Activated CD8-positive, alpha-beta T cell treated with anti-CD3 and anti-CD28 coated beads, Interleukin-2, amount 10 ng/mL, durations not matched to agents 7 days and 5 days (primary cell): ENCODE measurements at regions of chrX and their contacts with region 1.

Region 1: GRCh38 chrX:107672955-107673378 is 44.7 kb downstream of the PRPS1 start:
- DNase-seq: peak; percentile 83
- ATAC-seq: peak; percentile 39
- H3K4me3 Mint-ChIP-seq: peak overlapping the region; percentile 56
- H3K27ac Mint-ChIP-seq: peak overlapping the region; percentile 89
- H3K4me1 Mint-ChIP-seq: peaks cover 44% of the 10 kb centered on the region
- H3K27me3 Mint-ChIP-seq: no peaks in the 10 kb centered on the region

Region 2: DNA sequence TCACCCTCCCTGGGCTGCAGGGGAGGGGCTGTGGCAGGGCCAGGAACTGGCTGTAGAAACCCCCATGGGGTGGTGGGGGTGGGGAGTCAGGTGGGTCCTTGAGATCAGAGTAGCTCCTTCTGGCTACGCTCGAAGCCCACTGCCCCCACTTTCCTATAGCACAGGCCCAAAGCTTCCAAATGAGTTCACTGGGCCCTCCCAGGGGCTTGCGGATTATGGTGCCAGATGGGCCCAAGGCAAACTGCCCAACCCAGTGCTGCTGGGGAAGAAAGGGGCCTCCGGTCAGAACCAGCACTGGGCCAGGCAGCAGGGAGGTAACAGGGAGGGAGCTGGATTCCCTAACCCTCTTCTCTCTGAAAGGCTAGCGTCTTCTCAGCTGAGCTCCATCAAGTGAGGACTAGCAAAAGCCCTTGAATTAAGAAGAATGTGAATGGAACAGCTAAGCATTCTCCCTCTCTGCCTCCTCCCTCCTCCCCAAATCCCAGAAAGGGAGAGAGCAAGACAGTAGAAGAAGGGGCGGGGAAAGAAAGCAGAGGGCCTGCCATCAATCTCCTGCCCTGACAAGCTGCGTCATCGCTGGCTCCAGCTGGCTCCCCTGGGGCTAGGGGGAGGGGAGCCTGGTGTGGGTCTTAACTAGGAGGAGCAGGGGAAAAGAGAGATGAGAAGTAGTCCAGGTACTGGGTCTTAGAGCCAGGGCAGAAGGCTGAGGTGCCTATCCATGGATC is 188.8 kb before region 1 on chrX:
- CTCF ChIA-PET with region 1: no interaction called
- POLR2A ChIA-PET with region 1: no interaction called
- DNase-seq: no peak
- ATAC-seq: no peak
- H3K4me3 Mint-ChIP-seq: no peak overlapping the region
- H3K27ac Mint-ChIP-seq: no peak overlapping the region
- H3K4me1 Mint-ChIP-seq: no peaks in the 10 kb centered on the region
- H3K27me3 Mint-ChIP-seq: peaks cover 4% of the 10 kb centered on the region

Region 3: DNA sequence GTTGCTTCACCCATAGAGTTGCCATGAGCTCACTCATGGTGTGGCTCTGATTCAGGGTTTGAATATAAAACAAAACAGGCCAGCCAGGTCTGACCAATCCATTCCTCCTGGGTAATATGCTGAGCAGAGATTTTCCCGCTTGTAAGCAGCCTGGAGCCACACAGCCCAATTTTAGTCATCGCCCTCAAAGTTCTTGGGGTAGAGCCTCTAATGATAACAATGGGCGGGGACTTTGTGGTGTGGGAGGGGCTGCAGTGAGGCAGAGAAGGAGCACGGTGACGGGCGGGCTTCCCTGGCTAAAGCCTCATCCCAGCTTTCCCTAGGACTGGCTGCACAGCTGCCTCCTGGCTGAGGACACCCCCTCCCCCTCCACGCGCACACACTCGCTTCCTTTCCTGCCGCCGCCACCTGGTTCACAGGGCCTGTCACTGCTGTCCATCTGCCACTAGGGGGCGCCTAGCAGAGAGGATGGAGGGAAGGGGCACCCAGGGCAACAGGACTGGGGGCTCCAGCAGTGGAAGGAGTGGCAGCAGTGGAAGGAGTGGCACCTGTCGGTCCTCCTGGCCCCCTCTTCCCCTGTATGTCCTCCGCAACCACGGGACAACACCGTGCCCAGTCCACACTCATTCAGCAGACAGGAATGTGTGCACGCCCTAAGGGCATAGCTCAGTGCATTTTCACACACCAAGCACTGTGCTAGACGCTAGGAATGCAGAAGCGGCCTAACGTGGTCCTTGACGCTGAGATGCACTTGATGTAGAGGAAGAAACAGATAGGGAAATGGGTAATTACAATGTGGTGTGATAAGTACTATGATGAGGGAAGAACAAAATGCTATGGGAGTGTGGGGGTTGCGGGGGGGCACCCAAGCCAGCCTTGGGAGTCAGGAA is 17.9 kb before region 1 on chrX:
- CTCF ChIA-PET with region 1: interaction called, 20 read pairs
- POLR2A ChIA-PET with region 1: no interaction called
- DNase-seq: peak; percentile 73
- ATAC-seq: peak; percentile 70
- H3K4me3 Mint-ChIP-seq: no peak overlapping the region
- H3K27ac Mint-ChIP-seq: peak overlapping the region; percentile 30
- H3K4me1 Mint-ChIP-seq: peaks cover 10% of the 10 kb centered on the region
- H3K27me3 Mint-ChIP-seq: no peaks in the 10 kb centered on the region